Gastrocnemius medialis (tissue), 4 donors: ENCODE measurements at regions of chr3 and their contacts with region 1.

Region 1: DNA sequence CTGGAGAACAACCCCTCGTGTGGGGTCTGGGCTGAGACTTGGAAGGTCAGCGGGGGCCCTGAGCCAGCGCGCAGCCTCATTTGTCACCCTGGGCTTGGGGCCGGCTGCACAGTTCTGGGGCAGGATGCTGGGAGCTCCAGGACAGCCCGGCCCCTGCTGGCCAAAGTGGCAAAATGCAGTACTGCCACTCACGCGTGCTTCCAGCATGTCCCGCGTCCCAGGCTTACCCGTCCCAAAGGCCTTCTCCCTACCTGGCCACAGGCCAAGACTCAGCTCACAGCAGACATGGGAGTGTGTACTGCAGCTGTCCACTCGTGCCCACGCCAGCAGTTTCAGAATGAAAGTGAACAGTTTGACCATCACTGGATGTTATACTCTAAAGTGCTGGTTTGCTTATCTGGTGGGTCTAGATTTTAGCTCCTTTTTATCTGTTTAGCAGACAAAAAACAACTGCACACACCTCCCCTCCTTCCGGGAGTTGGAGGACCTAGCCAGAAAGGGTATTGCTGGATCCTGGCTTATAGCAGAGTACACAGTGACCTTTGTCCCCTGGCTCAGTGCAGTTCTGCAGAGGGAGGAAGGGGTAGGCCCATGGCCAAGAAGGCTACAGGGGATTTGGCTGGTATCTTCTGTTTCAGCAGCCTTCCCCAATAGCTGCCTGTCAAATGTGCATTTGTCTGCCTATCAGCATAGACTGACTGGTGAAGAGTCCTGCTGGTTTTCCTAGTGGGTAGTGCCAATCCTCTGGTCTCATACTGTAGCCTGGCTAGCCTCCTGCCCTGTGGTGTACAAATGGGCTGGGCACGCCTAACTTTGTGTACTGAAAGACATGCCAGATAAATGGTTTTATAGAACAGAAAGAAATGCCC is 23.2 kb upstream of the IP6K2 start:
- DNase-seq: peak; percentile 80 to 94
- ATAC-seq: peak; percentile 83 to 87
- H3K4me3 ChIP-seq: peak overlapping the region; percentile 8 to 30 (median 16)
- H3K27ac ChIP-seq: peak overlapping the region; percentile 74 to 89 (median 78)
- H3K4me1 ChIP-seq: peaks cover 26 to 45% of the 10 kb centered on the region in 2 donors
- H3K27me3 ChIP-seq: no peaks in the 10 kb centered on the region
- CTCF ChIP-seq: peak; percentile 71 to 91 (median 87)
- POLR2A ChIP-seq: no peak

Region 2: DNA sequence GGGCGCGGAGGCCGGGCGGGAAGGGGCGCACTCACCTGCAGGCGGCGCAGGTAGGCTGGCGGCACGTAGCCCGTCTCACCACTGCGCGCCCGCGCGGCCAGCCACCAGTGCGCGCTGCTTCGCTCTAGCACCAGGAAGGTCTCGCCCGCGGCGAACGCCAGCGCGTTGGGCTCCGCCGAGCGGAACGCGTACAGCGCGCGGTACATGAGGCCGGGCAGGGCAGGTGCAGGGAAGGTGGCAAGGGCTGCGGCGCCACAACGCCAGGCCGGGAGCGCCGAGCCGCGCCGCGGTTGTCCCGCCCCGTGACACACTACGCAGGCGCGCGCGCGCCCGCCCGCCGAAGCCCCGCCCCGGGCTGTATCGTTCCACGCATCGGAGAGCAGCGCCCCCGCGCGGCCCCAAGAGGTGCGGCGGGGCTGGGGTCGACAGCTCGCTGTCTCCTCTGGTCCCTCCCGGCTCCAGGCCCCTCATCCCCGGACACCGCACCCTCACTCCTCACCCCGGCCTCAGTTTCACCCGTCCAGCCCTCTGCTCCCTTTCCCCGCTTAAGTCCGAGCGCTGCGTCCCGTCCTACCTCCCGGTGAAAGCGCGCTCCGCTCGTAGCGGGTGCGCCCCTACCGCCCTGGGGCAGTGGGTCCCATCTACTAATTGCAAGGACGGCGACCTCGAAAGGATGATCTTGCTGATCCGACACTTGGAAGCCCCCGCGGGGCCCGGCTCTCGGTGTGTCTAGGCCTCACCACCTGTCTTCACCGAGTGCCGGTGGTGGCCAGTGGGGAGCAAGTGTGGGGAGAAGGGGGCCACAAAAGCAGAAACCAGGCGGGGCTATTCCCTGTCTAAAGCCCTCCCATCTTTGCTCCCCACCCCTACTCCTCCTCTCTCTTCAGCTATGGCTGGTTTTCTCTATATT is 54.3 kb before region 1 on chr3 and contains the start of gene NCKIPSD:
- in situ Hi-C with region 1: no loop called
- intact Hi-C with region 1: loop called (anchors 2 kb)
- DNase-seq: peak; percentile 66 to 82
- ATAC-seq: peak; percentile 92 to 95
- H3K4me3 ChIP-seq: peak within 1 kb of the TSS; percentile 69 to 96 (median 84)
- H3K27ac ChIP-seq: peak within 1 kb of the TSS; percentile 73 to 92 (median 90)
- H3K4me1 ChIP-seq: peaks cover 30 to 36% of the 10 kb centered on the region in 2 donors
- H3K27me3 ChIP-seq: no peaks in the 10 kb centered on the region
- CTCF ChIP-seq: peak; percentile 64 to 96 (median 90)
- POLR2A ChIP-seq: peak; percentile 62 to 77
- total RNA-seq, gene NCKIPSD: 13.2 to 33.1 (median 19.4) TPM

Region 3: GRCh38 chr3:48851407-48851806 is 111.2 kb after region 1 on chr3:
- in situ Hi-C with region 1: no loop called
- intact Hi-C with region 1: no loop called
- DNase-seq: no peak
- ATAC-seq: no peak
- H3K4me3 ChIP-seq: no peak overlapping the region
- H3K27ac ChIP-seq: no peak overlapping the region
- H3K4me1 ChIP-seq: peaks cover 18 to 38% of the 10 kb centered on the region in 2 donors
- H3K27me3 ChIP-seq: no peaks in the 10 kb centered on the region
- CTCF ChIP-seq: no peak
- POLR2A ChIP-seq: no peak

Region 4: DNA sequence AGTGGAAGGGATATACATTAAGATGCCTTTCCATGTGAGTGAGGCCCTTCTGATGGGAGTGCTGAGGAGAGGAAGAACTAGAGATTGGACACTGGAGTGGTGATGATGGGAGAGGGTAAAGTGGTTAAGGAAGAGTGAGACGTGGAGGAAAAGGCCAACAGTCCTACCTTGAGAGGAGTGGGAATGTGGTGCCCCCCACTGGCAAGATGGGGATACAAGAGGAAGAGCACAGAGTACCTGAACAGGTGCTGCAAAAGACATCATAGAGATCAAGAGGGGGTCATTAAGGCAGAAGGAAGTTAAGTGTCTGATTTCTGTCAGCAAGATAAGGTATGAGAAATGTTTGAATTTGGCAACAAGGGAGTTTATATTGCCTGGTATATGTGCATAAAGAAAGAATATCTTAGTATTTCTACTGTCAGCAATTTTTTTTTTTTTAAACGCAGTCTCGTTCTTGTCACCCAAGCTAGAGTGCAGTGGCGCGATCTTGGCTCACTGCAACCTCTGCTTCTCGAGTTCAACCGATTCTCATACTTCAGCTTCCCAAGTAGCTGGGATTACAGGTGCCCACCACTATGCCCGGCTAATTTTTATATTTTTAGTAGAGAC is 212.4 kb after region 1 on chr3:
- in situ Hi-C with region 1: no loop called
- intact Hi-C with region 1: loop called (anchors 5 kb)
- DNase-seq: peak in 1 of 2 donors; percentile 37
- ATAC-seq: peak in 1 of 2 donors; percentile 72
- H3K4me3 ChIP-seq: no peak overlapping the region
- H3K27ac ChIP-seq: no peak overlapping the region
- H3K4me1 ChIP-seq: peaks cover 27 to 50% of the 10 kb centered on the region in 2 donors
- H3K27me3 ChIP-seq: no peaks in the 10 kb centered on the region
- CTCF ChIP-seq: peak in 4 of 5 experiments; percentile 12 to 52 (median 40)
- POLR2A ChIP-seq: no peak

Region 5: DNA sequence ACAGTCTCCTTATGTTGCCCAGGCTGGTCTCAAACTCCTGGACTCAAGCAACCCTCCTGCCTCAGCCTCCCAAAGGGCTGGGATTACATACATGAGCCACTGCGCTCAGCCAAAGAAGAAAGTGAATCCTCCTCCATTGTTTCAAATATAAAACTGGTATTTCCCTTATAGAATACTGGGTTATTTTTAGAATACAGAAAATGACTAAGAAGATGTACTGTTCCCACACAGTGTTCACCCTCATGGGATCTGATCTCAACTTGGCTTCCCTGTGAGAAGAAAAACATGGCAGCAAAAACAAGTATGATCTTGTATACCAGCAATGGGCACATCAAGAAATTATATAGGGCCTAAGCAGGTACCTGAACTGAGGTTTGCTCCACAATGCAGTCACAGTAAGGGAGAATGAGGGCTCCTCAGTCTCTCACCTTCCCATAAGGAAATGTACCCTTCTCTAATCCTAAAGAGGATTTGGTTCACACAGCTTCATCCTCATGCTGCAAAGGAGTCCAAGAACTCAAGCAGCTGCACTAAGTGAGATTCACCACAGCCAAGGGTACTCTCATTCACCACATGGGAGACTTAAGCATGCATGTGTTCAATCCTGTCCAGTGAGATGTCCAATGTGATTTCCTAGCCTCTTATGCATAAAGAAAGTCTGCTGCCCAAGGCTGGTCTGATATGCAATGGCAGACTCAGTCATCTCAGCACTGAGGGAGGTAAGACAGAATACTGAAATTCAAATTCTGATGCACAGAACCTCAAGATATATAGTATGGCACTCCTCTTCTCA is 573.9 kb after region 1 on chr3:
- in situ Hi-C with region 1: no loop called
- intact Hi-C with region 1: no loop called
- DNase-seq: no peak
- ATAC-seq: peak; percentile 18 to 33
- H3K4me3 ChIP-seq: no peak overlapping the region
- H3K27ac ChIP-seq: peak overlapping the region in 1 of 4 donors; percentile 51
- H3K4me1 ChIP-seq: peaks cover 0 to 8% of the 10 kb centered on the region in 2 donors
- H3K27me3 ChIP-seq: no peaks in the 10 kb centered on the region
- CTCF ChIP-seq: no peak
- POLR2A ChIP-seq: no peak